ENCODE measurements at regions of chr4 and their contacts with region 1.

Region 1: GRCh38 chr4:121154103-121154515 is 10.0 kb downstream of the TNIP3 start:
- DNase-seq: peak; percentile 21
- H3K4me3 Mint-ChIP-seq: peak overlapping the region; percentile 56
- H3K27ac Mint-ChIP-seq: peak overlapping the region; percentile 51
- H3K4me1 Mint-ChIP-seq: peaks cover 56% of the 10 kb centered on the region
- H3K27me3 Mint-ChIP-seq: peaks cover 22% of the 10 kb centered on the region

Region 2: DNA sequence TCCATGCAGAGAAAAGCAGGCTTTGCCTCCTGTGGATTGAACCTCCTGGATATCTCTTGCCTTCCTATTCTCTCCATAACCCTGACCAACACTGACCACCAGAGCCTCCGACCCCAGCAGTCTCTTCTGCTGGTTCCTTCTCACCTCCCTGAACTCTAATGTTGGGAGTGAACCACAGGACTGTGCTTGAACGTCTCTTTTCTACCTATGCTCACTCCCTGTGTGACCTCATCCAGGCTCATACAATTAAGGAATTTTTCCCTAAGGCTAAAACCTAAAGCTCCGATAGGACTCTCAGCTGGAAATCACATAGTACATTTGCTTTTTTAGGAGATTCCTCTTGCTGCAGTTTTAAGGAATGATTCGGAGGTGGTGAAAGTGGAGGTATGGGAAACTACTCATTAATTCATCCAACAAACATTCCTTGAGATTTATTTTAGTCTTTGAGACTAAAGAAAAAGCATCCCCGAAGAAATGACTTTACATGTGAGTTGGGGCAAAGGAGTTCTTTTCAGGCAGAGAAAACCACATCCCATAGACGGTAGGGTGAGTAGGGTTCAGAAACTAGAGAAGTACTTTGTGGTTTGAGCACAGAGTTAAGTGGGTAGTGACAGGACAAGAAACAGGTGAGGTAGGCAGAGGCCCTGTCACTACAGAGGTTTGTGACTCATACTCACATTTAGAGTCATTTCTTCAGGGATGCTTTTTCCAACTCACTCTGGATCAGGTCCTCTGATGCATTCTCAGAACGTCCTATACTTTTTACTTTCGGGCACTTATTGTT is 112.6 kb before region 1 on chr4:
- intact Hi-C with region 1: loop called (anchors 1 kb)
- DNase-seq: peak; percentile 16
- H3K4me3 Mint-ChIP-seq: no peak overlapping the region
- H3K27ac Mint-ChIP-seq: no peak overlapping the region
- H3K4me1 Mint-ChIP-seq: peaks cover 13% of the 10 kb centered on the region
- H3K27me3 Mint-ChIP-seq: peaks cover 46% of the 10 kb centered on the region

Region 3: DNA sequence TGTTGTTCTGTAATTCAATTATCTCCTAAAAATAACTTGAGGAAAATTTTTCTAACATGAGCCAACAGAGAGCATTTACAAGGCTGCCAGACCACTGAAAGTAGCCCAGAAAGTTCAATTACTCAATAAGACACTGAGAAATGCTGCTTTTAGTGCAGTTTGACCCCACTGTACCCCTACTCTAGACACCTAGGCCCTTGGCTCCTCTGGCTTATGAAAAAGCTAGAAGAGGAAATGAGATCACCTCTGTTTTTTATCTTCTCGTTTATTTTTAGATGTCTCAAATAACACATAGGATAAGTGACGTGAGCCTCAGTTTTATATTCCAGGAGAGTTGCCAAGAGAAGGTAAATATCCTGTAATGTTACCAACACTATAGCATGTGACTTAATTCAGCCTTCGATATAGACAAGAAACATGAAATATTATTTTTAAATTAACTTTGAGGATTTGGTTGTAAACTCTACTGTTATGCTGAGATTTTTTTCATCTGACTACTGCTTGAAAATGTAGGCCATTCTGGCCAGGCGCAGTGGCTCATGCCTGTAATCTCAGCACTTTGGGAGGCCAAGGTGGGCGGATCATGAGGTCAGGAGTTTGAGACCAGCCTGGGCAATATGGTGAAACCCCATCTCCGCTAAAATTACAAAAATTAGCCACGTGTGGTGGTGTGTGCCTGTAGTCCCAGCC is 14.4 kb before region 1 on chr4:
- intact Hi-C with region 1: loop called (anchors 1 kb)
- DNase-seq: no peak
- H3K4me3 Mint-ChIP-seq: no peak overlapping the region
- H3K27ac Mint-ChIP-seq: peak overlapping the region; percentile 58
- H3K4me1 Mint-ChIP-seq: peaks cover 47% of the 10 kb centered on the region
- H3K27me3 Mint-ChIP-seq: no peaks in the 10 kb centered on the region

Region 4: GRCh38 chr4:121166976-121167375 is 12.9 kb after region 1 on chr4:
- intact Hi-C with region 1: loop called (anchors 1 kb)
- DNase-seq: no peak
- H3K4me3 Mint-ChIP-seq: no peak overlapping the region
- H3K27ac Mint-ChIP-seq: no peak overlapping the region
- H3K4me1 Mint-ChIP-seq: peaks cover 39% of the 10 kb centered on the region
- H3K27me3 Mint-ChIP-seq: peaks cover 13% of the 10 kb centered on the region

Region 5: DNA sequence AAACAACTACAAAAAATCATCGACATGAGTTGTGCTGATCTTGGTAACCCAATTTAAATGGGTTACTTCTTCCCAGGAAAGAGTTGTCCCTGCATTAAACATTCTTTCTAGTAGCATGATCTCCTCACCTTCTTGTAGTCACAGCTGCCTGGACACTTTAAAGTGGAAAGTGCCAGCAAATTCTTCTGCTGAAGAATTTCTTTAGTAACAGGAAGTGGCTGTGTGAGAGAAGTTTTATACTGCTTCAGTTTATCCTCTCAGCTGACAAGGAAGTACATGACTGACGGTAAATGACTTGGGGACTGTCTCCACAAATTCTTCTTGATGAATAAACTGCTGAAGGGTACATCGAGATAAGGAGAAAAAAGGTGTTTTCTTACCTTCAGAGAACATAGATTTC is 28.2 kb after region 1 on chr4:
- intact Hi-C with region 1: loop called (anchors 1 kb)
- DNase-seq: no peak
- H3K4me3 Mint-ChIP-seq: peak overlapping the region; percentile 73
- H3K27ac Mint-ChIP-seq: peak overlapping the region; percentile 87
- H3K4me1 Mint-ChIP-seq: peaks cover 51% of the 10 kb centered on the region
- H3K27me3 Mint-ChIP-seq: peaks cover 4% of the 10 kb centered on the region

Region 6: GRCh38 chr4:121192480-121192879 is 38.4 kb after region 1 on chr4:
- intact Hi-C with region 1: loop called (anchors 1 kb)
- DNase-seq: no peak
- H3K4me3 Mint-ChIP-seq: peak overlapping the region; percentile 55
- H3K27ac Mint-ChIP-seq: no peak overlapping the region
- H3K4me1 Mint-ChIP-seq: peaks cover 52% of the 10 kb centered on the region
- H3K27me3 Mint-ChIP-seq: no peaks in the 10 kb centered on the region

Region 7: DNA sequence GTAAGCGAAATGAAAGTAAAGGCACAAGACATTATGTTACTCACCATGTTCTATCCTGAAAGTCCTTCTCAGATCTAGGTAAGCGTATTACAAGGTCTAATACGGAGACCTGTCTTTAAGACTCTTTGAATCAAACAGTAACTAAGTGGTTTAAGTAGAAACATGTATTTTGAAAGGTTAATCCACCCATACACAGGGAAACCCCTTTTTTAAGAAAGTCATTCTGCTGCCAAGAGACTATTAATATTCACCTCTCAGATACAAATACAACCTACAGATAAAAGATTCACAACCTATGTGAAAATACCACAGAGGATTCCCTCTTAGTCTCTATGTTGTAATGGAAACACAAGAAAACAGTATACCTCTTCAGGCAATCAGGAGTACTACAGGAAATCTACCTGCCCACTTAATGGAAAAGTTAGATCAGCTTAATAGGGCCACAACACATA is 73.3 kb after region 1 on chr4:
- intact Hi-C with region 1: loop called (anchors 1 kb)
- DNase-seq: no peak
- H3K4me3 Mint-ChIP-seq: peak overlapping the region; percentile 76
- H3K27ac Mint-ChIP-seq: peak overlapping the region; percentile 64
- H3K4me1 Mint-ChIP-seq: peaks cover 28% of the 10 kb centered on the region
- H3K27me3 Mint-ChIP-seq: peaks cover under 1% of the 10 kb centered on the region

Measured in activated T-helper 2 cell treated with anti-CD3 and anti-CD28 coated beads, Interferon-gamma antibody, Interleukin-2, Interleukin-4, amounts not matched to agents 10 μg/mL and 5 μg/mL and 100 μg/mL, durations not matched to agents 14 hours and 24 hours and 36 hours (primary cell).